Psoas muscle (tissue), 8 donors: ENCODE measurements at regions of chr2 and their contacts with region 1.

Region 1: DNA sequence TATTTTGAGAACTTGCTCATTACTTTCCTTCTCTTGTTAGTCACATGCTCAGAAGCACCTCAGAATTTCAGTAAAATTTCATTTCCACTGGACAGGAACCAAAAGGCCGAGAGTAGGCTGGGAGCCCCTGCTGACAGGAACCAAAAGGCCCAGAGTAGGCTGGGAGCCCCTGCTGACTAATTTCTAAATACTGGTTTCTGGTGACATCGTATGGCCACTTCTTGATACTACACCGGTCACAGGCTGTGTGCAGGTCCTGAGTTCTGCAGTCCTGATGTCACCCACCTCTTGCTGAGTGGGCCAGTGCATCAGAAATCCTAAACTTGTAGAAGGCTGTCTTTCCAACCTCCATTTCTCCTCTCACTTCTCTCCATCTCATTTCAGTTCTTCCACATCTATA is 17.7 kb upstream of the EN1 start:
- DNase-seq: no peak
- ATAC-seq: peak; percentile 78 to 97 (median 88)
- H3K4me3 ChIP-seq: no peak overlapping the region
- H3K27ac ChIP-seq: no peak overlapping the region
- H3K4me1 ChIP-seq: no peaks in the 10 kb centered on the region
- H3K27me3 ChIP-seq: peaks cover 0 to 14% (median 2%) of the 10 kb centered on the region in 3 donors
- CTCF ChIP-seq: peak; percentile 60

Region 2: GRCh38 chr2:118032169-118033013 is 832.7 kb before region 1 on chr2:
- intact Hi-C with region 1: loop called in 1 of 2 experiments (anchors 10 kb)
- DNase-seq: no peak
- ATAC-seq: peak in 2 of 4 donors; percentile 57 to 70
- H3K4me3 ChIP-seq: no peak overlapping the region
- H3K27ac ChIP-seq: no peak overlapping the region
- H3K4me1 ChIP-seq: no peaks in the 10 kb centered on the region
- H3K27me3 ChIP-seq: peaks cover 0 to 19% (median 0%) of the 10 kb centered on the region in 3 donors
- CTCF ChIP-seq: peak; percentile 76

Region 3: GRCh38 chr2:118207889-118208288 is 657.2 kb before region 1 on chr2:
- intact Hi-C with region 1: loop called in 1 of 2 experiments (anchors 5 kb)
- DNase-seq: no peak
- ATAC-seq: no peak
- H3K4me3 ChIP-seq: no peak overlapping the region
- H3K27ac ChIP-seq: no peak overlapping the region
- H3K4me1 ChIP-seq: no peaks in the 10 kb centered on the region
- H3K27me3 ChIP-seq: peaks cover 0 to 8% (median 5%) of the 10 kb centered on the region in 3 donors
- CTCF ChIP-seq: no peak

Region 4: DNA sequence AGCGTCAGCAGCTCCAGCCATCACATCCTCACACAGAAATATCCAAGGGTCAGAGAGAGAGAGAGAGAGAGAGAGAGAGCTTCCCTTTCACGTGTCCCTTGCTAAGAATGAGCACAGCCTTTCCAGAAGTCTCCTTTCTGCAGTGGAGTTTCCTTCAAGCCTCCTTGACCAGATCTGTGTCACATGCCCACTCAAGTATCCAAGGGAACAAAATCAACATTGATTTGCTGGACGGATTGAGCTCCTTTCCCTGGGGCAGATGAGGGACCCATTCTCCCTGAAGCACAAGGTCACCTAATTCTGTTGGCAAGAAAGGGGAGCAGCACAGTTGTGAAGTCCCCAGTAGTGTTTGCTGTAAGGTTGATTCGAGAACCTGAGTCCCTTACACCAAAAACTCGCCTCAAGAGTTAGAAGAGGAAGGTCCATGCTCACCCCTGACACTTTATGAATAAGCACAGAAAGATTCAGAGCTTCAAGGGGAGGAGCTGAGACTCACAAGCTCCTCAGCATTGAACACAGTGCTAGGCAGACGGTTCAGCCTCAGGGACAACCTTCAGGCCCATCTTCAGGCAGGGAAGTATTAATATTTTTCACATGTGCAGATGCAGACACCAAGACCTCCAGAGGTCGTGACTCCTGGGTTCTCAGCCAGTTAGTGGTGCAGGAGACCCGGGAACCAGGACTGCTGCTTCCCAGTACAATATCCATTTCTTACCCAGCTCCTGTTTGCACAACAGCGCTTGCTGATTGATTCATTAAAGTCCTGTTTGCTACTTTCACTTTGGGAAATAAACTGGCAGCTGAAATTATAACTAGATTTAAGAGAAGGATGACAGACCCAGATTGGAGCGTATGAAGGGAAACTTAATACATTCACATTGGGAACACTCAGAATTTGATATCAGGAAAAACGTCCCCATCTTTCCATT is 38.7 kb after region 1 on chr2:
- intact Hi-C with region 1: no loop called
- DNase-seq: no peak
- ATAC-seq: no peak
- H3K4me3 ChIP-seq: no peak overlapping the region
- H3K27ac ChIP-seq: no peak overlapping the region
- H3K4me1 ChIP-seq: no peaks in the 10 kb centered on the region
- H3K27me3 ChIP-seq: peaks cover 0 to 2% (median 0%) of the 10 kb centered on the region in 3 donors
- CTCF ChIP-seq: no peak